ENCODE measurements at regions of chr7 and their contacts with region 1.

Region 1: GRCh38 chr7:47945261-47946001 is 2.8 kb downstream of the PKD1L1 start:
- DNase-seq: no peak

Region 2: DNA sequence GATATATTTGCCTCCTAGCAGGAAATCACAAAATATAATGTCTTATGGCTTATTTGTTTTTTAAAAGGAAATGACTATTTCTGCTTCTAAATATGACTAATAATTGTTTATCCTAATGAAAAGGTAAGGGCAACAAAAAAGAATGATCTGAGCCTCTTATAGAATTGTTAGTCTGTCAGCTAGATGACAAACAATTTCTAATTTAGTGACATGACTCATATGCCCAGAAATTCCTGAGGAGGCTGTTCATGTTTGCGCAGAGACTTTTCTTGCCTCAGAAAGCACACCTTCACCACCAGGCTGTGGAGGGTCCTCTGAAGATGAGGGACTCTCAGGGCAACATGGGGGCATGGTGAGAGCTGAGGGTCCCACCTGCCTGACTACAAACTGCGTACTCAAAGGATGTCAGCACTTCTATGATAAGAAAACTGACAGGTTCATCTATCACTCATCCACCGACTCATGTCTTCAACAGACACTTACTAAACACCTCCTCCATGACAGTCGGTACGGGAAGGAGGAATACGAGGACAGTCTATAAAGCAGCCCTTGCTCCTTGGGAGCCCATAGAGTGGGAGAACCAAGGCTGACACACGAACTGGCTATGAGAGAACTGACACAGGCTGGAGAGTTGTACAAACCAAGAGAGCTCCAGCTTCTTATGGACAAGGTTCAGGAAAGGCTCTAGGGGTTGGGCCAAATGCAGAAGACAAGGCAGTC is 99.2 kb before region 1 on chr7:
- intact Hi-C with region 1: loop called (anchors 5 kb)
- DNase-seq: no peak

Region 3: GRCh38 chr7:47968847-47969774 is 23.7 kb after region 1 on chr7:
- intact Hi-C with region 1: loop called (anchors 2 kb)
- DNase-seq: no peak

Region 4: GRCh38 chr7:48109848-48110663 is 164.6 kb after region 1 on chr7:
- intact Hi-C with region 1: loop called (anchors 2 kb)
- DNase-seq: peak; percentile 89